Common myeloid progenitor, CD34-positive (primary cell): ENCODE measurements at regions of chr9 and their contacts with region 1.

Region 1: GRCh38 chr9:70111042-70111602 is 67.5 kb downstream of the MAMDC2 start:
- DNase-seq: peak; percentile 53 to 77 (median 73)
- H3K4me3 ChIP-seq: no peak overlapping the region
- H3K27ac ChIP-seq: no peak overlapping the region
- H3K4me1 ChIP-seq: peaks cover 0 to 18% (median 4%) of the 10 kb centered on the region in 4 experiments
- H3K27me3 ChIP-seq: peaks cover 0 to 4% (median 0%) of the 10 kb centered on the region in 5 experiments

Region 2: GRCh38 chr9:69971643-69972449 is 139.3 kb before region 1 on chr9:
- CTCF ChIA-PET with region 1: interaction called, 185 read pairs
- POLR2A ChIA-PET with region 1: interaction called, 4 read pairs
- DNase-seq: peak; percentile 57 to 83 (median 75)
- H3K4me3 ChIP-seq: no peak overlapping the region
- H3K27ac ChIP-seq: no peak overlapping the region
- H3K4me1 ChIP-seq: peaks cover 0 to 12% (median 0%) of the 10 kb centered on the region in 4 experiments
- H3K27me3 ChIP-seq: peaks cover 0 to 2% (median 0%) of the 10 kb centered on the region in 5 experiments

Region 3: GRCh38 chr9:69981686-69982450 is 129.3 kb before region 1 on chr9:
- CTCF ChIA-PET with region 1: interaction called, 72 read pairs
- POLR2A ChIA-PET with region 1: no interaction called
- DNase-seq: no peak
- H3K4me3 ChIP-seq: no peak overlapping the region
- H3K27ac ChIP-seq: no peak overlapping the region
- H3K4me1 ChIP-seq: no peaks in the 10 kb centered on the region
- H3K27me3 ChIP-seq: peaks cover 0 to 2% (median 0%) of the 10 kb centered on the region in 5 experiments

Region 4: GRCh38 chr9:70053864-70054263 is 57.3 kb before region 1 on chr9:
- CTCF ChIA-PET with region 1: interaction called, 12 read pairs
- POLR2A ChIA-PET with region 1: no interaction called
- DNase-seq: peak; percentile 93 to 98 (median 97)
- H3K4me3 ChIP-seq: peak overlapping the region in 2 of 7 experiments; percentile 16 to 25
- H3K27ac ChIP-seq: peak overlapping the region; percentile 61 to 75
- H3K4me1 ChIP-seq: peaks cover 0 to 48% (median 16%) of the 10 kb centered on the region in 4 experiments
- H3K27me3 ChIP-seq: peaks cover 0 to 3% (median 0%) of the 10 kb centered on the region in 5 experiments

Region 5: GRCh38 chr9:70085241-70085640 is 25.9 kb before region 1 on chr9:
- CTCF ChIA-PET with region 1: interaction called, 45 read pairs
- POLR2A ChIA-PET with region 1: no interaction called
- DNase-seq: peak; percentile 13 to 44 (median 44)
- H3K4me3 ChIP-seq: no peak overlapping the region
- H3K27ac ChIP-seq: no peak overlapping the region
- H3K4me1 ChIP-seq: peaks cover 0 to 20% (median 10%) of the 10 kb centered on the region in 4 experiments
- H3K27me3 ChIP-seq: peaks cover 0 to 3% (median 0%) of the 10 kb centered on the region in 5 experiments

Region 6: GRCh38 chr9:70093944-70094343 is 17.2 kb before region 1 on chr9:
- CTCF ChIA-PET with region 1: interaction called, 57 read pairs
- POLR2A ChIA-PET with region 1: no interaction called
- DNase-seq: peak; percentile 72 to 98 (median 97)
- H3K4me3 ChIP-seq: no peak overlapping the region
- H3K27ac ChIP-seq: peak overlapping the region; percentile 83 to 88
- H3K4me1 ChIP-seq: peaks cover 0 to 28% (median 6%) of the 10 kb centered on the region in 4 experiments
- H3K27me3 ChIP-seq: no peaks in the 10 kb centered on the region

Region 7: DNA sequence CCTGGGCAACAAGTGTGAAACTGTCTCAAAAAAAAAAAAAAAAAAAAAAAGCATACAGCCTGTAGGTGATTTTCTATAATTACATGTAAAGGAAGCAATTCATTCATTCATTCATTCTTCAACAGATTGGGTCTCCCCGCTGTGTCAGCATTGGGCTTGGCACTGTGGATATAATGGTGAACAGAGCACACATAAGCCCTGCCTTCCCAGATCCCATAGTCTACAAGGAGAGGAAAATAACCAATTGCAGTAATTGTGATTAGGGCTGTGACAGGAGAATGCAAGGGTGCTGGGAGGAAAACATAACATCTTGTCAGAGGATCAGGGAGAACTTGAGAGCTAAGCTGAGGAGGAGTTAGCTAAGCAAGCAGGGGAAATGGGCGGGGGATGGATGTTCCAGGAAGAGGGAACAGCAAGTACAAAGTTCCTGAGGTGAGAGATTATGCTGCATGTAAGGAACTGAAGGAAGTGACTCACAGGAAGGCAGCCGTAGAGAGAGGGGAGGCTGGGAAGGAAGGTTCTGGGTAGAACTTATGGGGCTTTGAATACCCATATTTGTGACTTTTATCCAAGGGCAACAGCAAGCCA is 327.3 kb after region 1 on chr9:
- CTCF ChIA-PET with region 1: no interaction called
- POLR2A ChIA-PET with region 1: no interaction called
- DNase-seq: peak; percentile 44 to 60 (median 50)
- H3K4me3 ChIP-seq: no peak overlapping the region
- H3K27ac ChIP-seq: no peak overlapping the region
- H3K4me1 ChIP-seq: peaks cover 0 to 12% (median 8%) of the 10 kb centered on the region in 4 experiments
- H3K27me3 ChIP-seq: no peaks in the 10 kb centered on the region